HCT116 (cell line): ENCODE measurements at regions of chr12 and their contacts with region 1.

Region 1: DNA sequence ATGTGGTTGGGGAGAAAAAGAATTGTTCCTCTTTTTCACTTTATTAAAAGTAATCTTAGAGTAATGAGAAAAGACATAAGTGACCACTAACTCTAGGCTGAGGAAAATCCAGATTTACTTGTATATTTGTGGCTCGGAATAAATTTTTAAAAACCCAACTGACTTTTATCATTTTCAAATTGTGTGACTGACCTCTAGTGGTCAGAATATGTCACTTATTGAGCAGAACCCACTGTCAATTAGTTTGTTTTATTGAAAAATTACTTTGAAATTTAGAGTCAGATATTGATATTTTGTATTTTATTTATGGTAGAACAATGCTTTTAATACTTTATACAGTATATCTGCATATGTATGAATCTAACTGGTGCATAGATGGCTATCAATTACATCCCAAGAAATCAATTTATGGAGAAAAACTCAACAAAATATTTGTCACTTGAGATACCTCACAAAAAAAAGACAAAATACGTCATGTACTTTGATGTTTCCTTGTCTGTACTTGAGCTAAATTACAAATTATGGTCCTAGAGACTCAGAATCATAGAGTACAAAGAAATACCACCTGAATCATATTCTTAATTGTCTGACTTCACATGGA is 229.4 kb downstream of the CNTN1 start:
- DNase-seq: peak; percentile 12
- ATAC-seq: no peak
- H3K4me3 ChIP-seq: no peak overlapping the region
- H3K27ac ChIP-seq: no peak overlapping the region
- H3K4me1 ChIP-seq: no peaks in the 10 kb centered on the region
- H3K27me3 ChIP-seq: no peaks in the 10 kb centered on the region
- CTCF ChIP-seq: peak; percentile 40 to 73 (median 65); a peak in 5 of 6 replicates
- POLR2A ChIP-seq: no peak
- RAD21 ChIP-seq: peak; percentile 73

Region 2: GRCh38 chr12:40325349-40325960 is 596.2 kb before region 1 on chr12:
- CTCF ChIA-PET with region 1: no interaction called
- POLR2A ChIA-PET with region 1: no interaction called
- RAD21 ChIA-PET with region 1: no interaction called
- intact Hi-C with region 1: loop called (anchors 2 kb)
- DNase-seq: peak; percentile 59
- ATAC-seq: peak; percentile 95
- H3K4me3 ChIP-seq: 0 out of 4 replicates have a peak overlapping the region, but pooled peaks of 1 of the 2 experiments have one; percentile 44
- H3K27ac ChIP-seq: no peak overlapping the region
- H3K4me1 ChIP-seq: peaks cover 2 to 9% of the 10 kb centered on the region in 2 experiments; a peak in 3 of 4 replicates
- H3K27me3 ChIP-seq: no peaks in the 10 kb centered on the region
- CTCF ChIP-seq: peak; percentile 37 to 89 (median 76); a peak in 5 of 6 replicates
- POLR2A ChIP-seq: no peak
- RAD21 ChIP-seq: peak; percentile 65

Region 3: DNA sequence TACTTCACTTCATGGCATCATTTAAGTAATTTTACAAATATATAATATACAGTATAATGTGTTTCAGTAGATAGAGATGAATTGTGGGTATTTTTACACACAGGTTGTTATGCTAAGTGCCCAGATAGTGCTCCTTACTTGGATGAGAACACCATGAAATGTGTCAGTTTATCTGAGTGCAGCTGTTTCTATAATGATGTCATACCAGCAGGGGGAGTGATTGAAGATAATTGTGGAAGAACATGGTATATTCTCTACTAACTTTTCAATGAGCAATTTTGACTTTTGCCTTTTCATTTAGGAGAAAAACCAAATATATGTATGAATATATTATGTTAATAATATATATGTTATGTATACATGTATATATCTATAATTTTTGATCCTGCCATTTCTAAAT is 475.3 kb before region 1 on chr12:
- CTCF ChIA-PET with region 1: interaction called, 3 read pairs
- POLR2A ChIA-PET with region 1: no interaction called
- RAD21 ChIA-PET with region 1: no interaction called
- intact Hi-C with region 1: loop called (anchors 5 kb)
- DNase-seq: peak; percentile 3
- ATAC-seq: peak; percentile 61
- H3K4me3 ChIP-seq: no peak overlapping the region
- H3K27ac ChIP-seq: no peak overlapping the region
- H3K4me1 ChIP-seq: no peaks in the 10 kb centered on the region
- H3K27me3 ChIP-seq: no peaks in the 10 kb centered on the region
- CTCF ChIP-seq: peak in 2 of 3 experiments; percentile 34 to 55; a peak in 3 of 6 replicates
- POLR2A ChIP-seq: no peak
- RAD21 ChIP-seq: no peak

Region 4: DNA sequence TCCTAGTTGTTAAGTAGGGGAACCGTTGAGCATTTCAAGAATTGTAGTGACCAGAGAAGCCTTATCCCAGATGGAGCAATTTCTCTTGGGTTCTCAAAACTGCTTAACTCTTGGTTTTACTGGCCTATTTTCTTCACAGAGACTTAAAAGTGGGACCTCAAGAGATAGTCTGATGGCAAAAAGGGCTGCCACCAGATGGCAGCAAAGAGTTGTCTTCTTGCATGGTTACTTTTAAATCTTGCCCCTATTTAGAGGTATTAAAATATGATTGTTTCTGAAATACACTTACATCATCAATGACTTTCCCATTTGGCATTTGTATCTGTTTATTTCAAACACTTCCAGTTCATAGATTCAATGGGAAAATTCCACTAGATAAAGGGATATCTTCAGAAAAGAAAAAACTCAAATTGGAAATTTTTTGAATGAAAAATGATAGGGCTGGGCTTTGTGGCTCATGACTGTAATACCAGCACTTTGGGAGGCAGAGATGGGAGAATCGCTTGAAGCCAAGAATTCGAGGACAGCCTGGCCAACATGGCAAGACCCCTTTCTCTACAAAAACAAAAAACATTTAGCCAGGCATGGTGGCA is 299.3 kb before region 1 on chr12:
- CTCF ChIA-PET with region 1: interaction called, 10 read pairs
- POLR2A ChIA-PET with region 1: no interaction called
- RAD21 ChIA-PET with region 1: no interaction called
- intact Hi-C with region 1: loop called (anchors 1 kb)
- DNase-seq: peak; percentile 50
- ATAC-seq: peak; percentile 67
- H3K4me3 ChIP-seq: no peak overlapping the region
- H3K27ac ChIP-seq: no peak overlapping the region
- H3K4me1 ChIP-seq: no peaks in the 10 kb centered on the region
- H3K27me3 ChIP-seq: no peaks in the 10 kb centered on the region
- CTCF ChIP-seq: peak; percentile 41 to 85 (median 74); a peak in 5 of 6 replicates
- POLR2A ChIP-seq: no peak
- RAD21 ChIP-seq: peak; percentile 76

Region 5: DNA sequence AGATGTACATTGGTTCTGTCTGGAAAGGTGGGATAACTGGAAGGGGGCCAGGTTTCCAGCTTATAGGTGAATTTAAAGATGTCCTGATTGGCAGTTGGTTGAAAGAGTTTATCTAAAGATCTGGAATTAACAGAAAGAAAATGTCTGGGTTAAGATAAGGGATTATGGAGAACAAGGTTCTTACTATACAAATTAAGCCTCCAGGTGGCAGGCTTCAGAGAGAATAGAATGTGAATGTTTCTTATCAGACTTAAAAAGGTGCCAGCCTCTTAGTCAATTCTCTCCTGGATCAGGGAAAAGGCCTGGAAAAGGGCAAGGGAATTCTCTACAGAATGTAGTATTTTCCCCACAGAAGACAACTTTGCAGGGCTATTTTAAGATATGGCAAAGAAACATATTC is 176.3 kb before region 1 on chr12:
- CTCF ChIA-PET with region 1: no interaction called
- POLR2A ChIA-PET with region 1: no interaction called
- RAD21 ChIA-PET with region 1: no interaction called
- intact Hi-C with region 1: loop called (anchors 1 kb)
- DNase-seq: peak; percentile 4
- ATAC-seq: peak; percentile 55
- H3K4me3 ChIP-seq: no peak overlapping the region
- H3K27ac ChIP-seq: no peak overlapping the region
- H3K4me1 ChIP-seq: no peaks in the 10 kb centered on the region
- H3K27me3 ChIP-seq: no peaks in the 10 kb centered on the region
- CTCF ChIP-seq: peak; percentile 14 to 43 (median 33); a peak in 3 of 6 replicates
- POLR2A ChIP-seq: no peak
- RAD21 ChIP-seq: peak; percentile 15; the same call in 1 of the 2 replicates